CD8-positive, alpha-beta T cell (primary cell): ENCODE measurements at regions of chr19 and their contacts with region 1.

Region 1: GRCh38 chr19:48492925-48493717 is 18.5 kb downstream of the LMTK3 start:
- DNase-seq: peak; percentile 68 to 89 (median 80)
- ATAC-seq: peak; percentile 79
- H3K4me3 ChIP-seq: peak overlapping the region; percentile 41 to 58
- H3K4me3 Mint-ChIP-seq: peak overlapping the region; percentile 71
- H3K27ac ChIP-seq: no peak overlapping the region
- H3K27ac Mint-ChIP-seq: no peak overlapping the region
- H3K4me1 ChIP-seq: peaks cover 38% of the 10 kb centered on the region
- H3K4me1 Mint-ChIP-seq: peaks cover 38% of the 10 kb centered on the region
- H3K27me3 ChIP-seq: peaks cover 0 to 19% of the 10 kb centered on the region in 2 experiments
- H3K27me3 Mint-ChIP-seq: peaks cover 3% of the 10 kb centered on the region
- CTCF ChIP-seq: no peak

Region 2: GRCh38 chr19:48333467-48334384 is 159.4 kb before region 1 on chr19:
- CTCF ChIA-PET with region 1: interaction called, 6 read pairs
- POLR2A ChIA-PET with region 1: no interaction called
- intact Hi-C with region 1: loop called in 1 of 2 experiments (anchors 1 kb)
- DNase-seq: peak; percentile 88 to 97 (median 93)
- ATAC-seq: peak; percentile 55
- H3K4me3 ChIP-seq: peak overlapping the region; percentile 73 to 78
- H3K4me3 Mint-ChIP-seq: peak overlapping the region; percentile 94
- H3K27ac ChIP-seq: peak overlapping the region; percentile 65 to 98
- H3K27ac Mint-ChIP-seq: peak overlapping the region; percentile 96
- H3K4me1 ChIP-seq: peaks cover 41% of the 10 kb centered on the region
- H3K4me1 Mint-ChIP-seq: peaks cover 51% of the 10 kb centered on the region
- H3K27me3 ChIP-seq: no peaks in the 10 kb centered on the region
- H3K27me3 Mint-ChIP-seq: no peaks in the 10 kb centered on the region
- CTCF ChIP-seq: peak; percentile 79

Region 3: GRCh38 chr19:48419158-48419920 is 73.8 kb before region 1 on chr19:
- CTCF ChIA-PET with region 1: no interaction called
- POLR2A ChIA-PET with region 1: no interaction called
- intact Hi-C with region 1: loop called in 1 of 2 experiments (anchors 5 kb)
- DNase-seq: peak; percentile 43 to 87 (median 72)
- ATAC-seq: peak; percentile 64
- H3K4me3 ChIP-seq: peak overlapping the region in 1 of 2 experiments; percentile 34
- H3K4me3 Mint-ChIP-seq: peak overlapping the region; percentile 77
- H3K27ac ChIP-seq: no peak overlapping the region
- H3K27ac Mint-ChIP-seq: no peak overlapping the region
- H3K4me1 ChIP-seq: peaks cover 16% of the 10 kb centered on the region
- H3K4me1 Mint-ChIP-seq: peaks cover 19% of the 10 kb centered on the region
- H3K27me3 ChIP-seq: peaks cover 0 to 2% of the 10 kb centered on the region in 2 experiments
- H3K27me3 Mint-ChIP-seq: peaks cover 25% of the 10 kb centered on the region
- CTCF ChIP-seq: no peak

Region 4: GRCh38 chr19:48475369-48476068 is 17.6 kb before region 1 on chr19:
- CTCF ChIA-PET with region 1: interaction called, 25 read pairs
- POLR2A ChIA-PET with region 1: interaction called, 6 read pairs
- intact Hi-C with region 1: loop called in 1 of 2 experiments (anchors 1 kb)
- DNase-seq: no peak
- ATAC-seq: no peak
- H3K4me3 ChIP-seq: no peak overlapping the region
- H3K4me3 Mint-ChIP-seq: no peak overlapping the region
- H3K27ac ChIP-seq: no peak overlapping the region
- H3K27ac Mint-ChIP-seq: peak overlapping the region; percentile 32
- H3K4me1 ChIP-seq: peaks cover 1% of the 10 kb centered on the region
- H3K4me1 Mint-ChIP-seq: peaks cover 8% of the 10 kb centered on the region
- H3K27me3 ChIP-seq: no peaks in the 10 kb centered on the region
- H3K27me3 Mint-ChIP-seq: no peaks in the 10 kb centered on the region
- CTCF ChIP-seq: no peak

Region 5: DNA sequence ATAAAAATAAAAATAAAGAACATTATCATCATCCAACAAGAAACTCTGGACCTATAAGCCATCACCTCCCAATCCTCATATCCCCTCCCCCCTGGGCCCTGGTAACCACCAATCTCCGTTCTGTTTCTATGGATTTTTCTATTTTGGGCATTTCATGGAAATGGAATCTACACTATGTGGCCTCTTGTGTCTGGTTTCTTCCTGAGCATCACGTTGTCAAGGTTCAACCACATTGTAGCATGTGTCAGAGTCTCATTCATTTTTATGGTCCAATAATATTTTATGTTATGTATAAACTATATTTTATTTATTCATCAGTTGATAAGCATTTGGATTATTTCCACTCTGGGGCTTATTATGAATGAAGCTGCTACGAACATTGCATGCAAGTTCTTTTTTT is 85.8 kb after region 1 on chr19:
- CTCF ChIA-PET with region 1: interaction called, 84 read pairs
- POLR2A ChIA-PET with region 1: interaction called, 3 read pairs
- intact Hi-C with region 1: loop called (anchors 1 kb)
- DNase-seq: no peak
- ATAC-seq: no peak
- H3K4me3 ChIP-seq: no peak overlapping the region
- H3K4me3 Mint-ChIP-seq: no peak overlapping the region
- H3K27ac ChIP-seq: no peak overlapping the region
- H3K27ac Mint-ChIP-seq: no peak overlapping the region
- H3K4me1 ChIP-seq: no peaks in the 10 kb centered on the region
- H3K4me1 Mint-ChIP-seq: peaks cover under 1% of the 10 kb centered on the region
- H3K27me3 ChIP-seq: no peaks in the 10 kb centered on the region
- H3K27me3 Mint-ChIP-seq: peaks cover 2% of the 10 kb centered on the region
- CTCF ChIP-seq: no peak

Region 6: GRCh38 chr19:48660854-48661731 is 168.0 kb after region 1 on chr19:
- CTCF ChIA-PET with region 1: no interaction called
- POLR2A ChIA-PET with region 1: no interaction called
- intact Hi-C with region 1: no loop called
- DNase-seq: peak; percentile 53 to 92 (median 79)
- ATAC-seq: peak; percentile 90
- H3K4me3 ChIP-seq: peak overlapping the region; percentile 31 to 36
- H3K4me3 Mint-ChIP-seq: peak overlapping the region; percentile 70
- H3K27ac ChIP-seq: peak overlapping the region; percentile 56 to 68
- H3K27ac Mint-ChIP-seq: peak overlapping the region; percentile 90
- H3K4me1 ChIP-seq: peaks cover 11% of the 10 kb centered on the region
- H3K4me1 Mint-ChIP-seq: peaks cover 9% of the 10 kb centered on the region
- H3K27me3 ChIP-seq: no peaks in the 10 kb centered on the region
- H3K27me3 Mint-ChIP-seq: no peaks in the 10 kb centered on the region
- CTCF ChIP-seq: no peak